Ascending aorta (tissue), 2 donors: ENCODE measurements at regions of chr5 and their contacts with region 1.

Region 1: GRCh38 chr5:43729846-43730478 is 127.0 kb downstream of the NNT start:
- DNase-seq: no peak
- H3K4me3 ChIP-seq: no peak overlapping the region
- H3K27ac ChIP-seq: no peak overlapping the region
- H3K4me1 ChIP-seq: no peaks in the 10 kb centered on the region
- H3K27me3 ChIP-seq: no peaks in the 10 kb centered on the region
- CTCF ChIP-seq: peak in 2 of 3 experiments; percentile 60 to 63

Region 2: GRCh38 chr5:43631182-43631910 is 98.6 kb before region 1 on chr5:
- intact Hi-C with region 1: loop called (anchors 2 kb)
- DNase-seq: peak in 1 of 2 donors; percentile 66
- H3K4me3 ChIP-seq: no peak overlapping the region
- H3K27ac ChIP-seq: peak overlapping the region in 1 of 2 donors; percentile 40
- H3K4me1 ChIP-seq: peaks cover 0 to 17% of the 10 kb centered on the region in 2 donors
- H3K27me3 ChIP-seq: no peaks in the 10 kb centered on the region
- CTCF ChIP-seq: peak; percentile 31 to 74 (median 70)

Region 3: GRCh38 chr5:43661102-43661501 is 68.9 kb before region 1 on chr5:
- intact Hi-C with region 1: loop called (anchors 5 kb)
- DNase-seq: no peak
- H3K4me3 ChIP-seq: no peak overlapping the region
- H3K27ac ChIP-seq: no peak overlapping the region
- H3K4me1 ChIP-seq: peaks cover 0 to 6% of the 10 kb centered on the region in 2 donors
- H3K27me3 ChIP-seq: no peaks in the 10 kb centered on the region
- CTCF ChIP-seq: peak; percentile 16 to 67 (median 64)

Region 4: GRCh38 chr5:43903129-43903528 is 173.2 kb after region 1 on chr5:
- intact Hi-C with region 1: no loop called
- DNase-seq: no peak
- H3K4me3 ChIP-seq: no peak overlapping the region
- H3K27ac ChIP-seq: no peak overlapping the region
- H3K4me1 ChIP-seq: no peaks in the 10 kb centered on the region
- H3K27me3 ChIP-seq: no peaks in the 10 kb centered on the region
- CTCF ChIP-seq: no peak

Region 5: DNA sequence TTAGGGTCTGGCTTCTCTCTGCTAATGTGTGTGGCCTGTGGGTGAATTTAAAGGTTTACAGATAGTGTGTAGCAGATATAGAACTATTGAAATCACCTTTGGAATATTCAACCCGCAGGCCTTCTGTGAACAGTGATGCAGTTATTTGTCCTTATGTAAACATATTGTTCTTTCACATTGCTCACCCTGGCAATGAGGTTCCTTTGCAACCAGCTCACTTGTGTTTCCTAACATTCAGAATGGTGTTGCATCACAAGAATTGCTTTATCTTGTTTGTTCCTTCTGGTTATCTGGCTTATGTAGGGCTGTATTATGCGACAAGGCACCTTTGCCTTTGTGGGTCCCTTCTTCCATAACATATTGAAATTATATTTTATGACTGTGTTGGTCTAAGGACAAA is 243.4 kb after region 1 on chr5:
- intact Hi-C with region 1: no loop called
- DNase-seq: no peak
- H3K4me3 ChIP-seq: no peak overlapping the region
- H3K27ac ChIP-seq: no peak overlapping the region
- H3K4me1 ChIP-seq: no peaks in the 10 kb centered on the region
- H3K27me3 ChIP-seq: no peaks in the 10 kb centered on the region
- CTCF ChIP-seq: no peak

Region 6: GRCh38 chr5:44332285-44332971 is 602.5 kb after region 1 on chr5:
- intact Hi-C with region 1: loop called (anchors 5 kb)
- DNase-seq: no peak
- H3K4me3 ChIP-seq: no peak overlapping the region
- H3K27ac ChIP-seq: peak overlapping the region in 1 of 2 donors; percentile 19
- H3K4me1 ChIP-seq: no peaks in the 10 kb centered on the region
- H3K27me3 ChIP-seq: no peaks in the 10 kb centered on the region
- CTCF ChIP-seq: peak in 2 of 3 experiments; percentile 35 to 49

Region 7: GRCh38 chr5:44774279-44774880 is 1044.4 kb after region 1 on chr5:
- intact Hi-C with region 1: loop called (anchors 10 kb)
- DNase-seq: no peak
- H3K4me3 ChIP-seq: no peak overlapping the region
- H3K27ac ChIP-seq: no peak overlapping the region
- H3K4me1 ChIP-seq: no peaks in the 10 kb centered on the region
- H3K27me3 ChIP-seq: no peaks in the 10 kb centered on the region
- CTCF ChIP-seq: peak; percentile 10 to 54 (median 31)